ENCODE measurements at regions of chr17 and their contacts with region 1.

Region 1: GRCh38 chr17:16521070-16521727 is 29.2 kb upstream of the LRRC75A start:
- DNase-seq: peak; percentile 32 to 84
- ATAC-seq: peak; percentile 87 to 95 (median 92)
- H3K4me3 ChIP-seq: no peak overlapping the region
- H3K27ac ChIP-seq: no peak overlapping the region
- H3K4me1 ChIP-seq: peaks cover 0 to 18% (median 10%) of the 10 kb centered on the region in 9 donors
- H3K27me3 ChIP-seq: peaks cover 0 to 4% (median 0%) of the 10 kb centered on the region in 7 donors
- CTCF ChIP-seq: peak; percentile 83 to 95 (median 93)

Region 2: DNA sequence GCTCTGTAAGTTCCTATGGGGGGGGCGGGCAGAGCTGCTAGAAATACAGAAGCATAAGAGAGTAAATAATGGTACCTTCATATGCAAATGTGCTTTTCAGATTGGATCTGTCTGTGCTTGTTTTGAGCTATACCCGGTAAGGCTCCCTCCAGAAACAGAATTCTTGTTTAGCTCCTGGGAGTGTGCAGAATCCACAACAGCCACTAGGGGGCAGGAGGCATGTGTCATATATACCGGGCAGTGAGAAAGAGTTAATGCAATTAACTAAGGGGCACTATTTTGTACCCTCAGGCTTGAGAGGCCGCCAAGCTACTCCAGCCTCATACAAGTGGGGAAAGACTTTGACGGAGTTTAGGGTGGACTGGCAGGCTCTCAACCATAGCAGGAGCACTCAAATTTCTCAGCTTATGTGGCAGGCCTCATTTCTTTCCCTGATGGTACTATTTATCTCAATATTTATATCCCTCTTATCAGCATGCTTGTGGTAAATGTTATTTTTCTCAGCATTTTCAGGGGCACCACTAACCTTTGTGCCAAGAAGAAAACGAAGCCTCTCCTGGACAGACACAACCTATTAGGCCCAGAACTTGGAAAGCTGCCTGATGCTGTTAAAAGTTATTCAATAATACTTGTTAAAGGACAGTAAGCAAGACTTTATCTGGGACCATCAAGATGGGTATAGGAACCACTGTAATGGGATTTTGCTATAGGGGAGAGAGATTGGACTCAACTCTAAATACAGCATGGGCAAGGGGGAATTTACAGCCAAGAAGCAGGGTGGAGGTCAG is 157.3 kb before region 1 on chr17:
- intact Hi-C with region 1: loop called in 9 of 10 experiments (anchors 1 to 10 kb)
- DNase-seq: peak; percentile 63 to 68
- ATAC-seq: peak; percentile 55 to 90 (median 84)
- H3K4me3 ChIP-seq: no peak overlapping the region
- H3K27ac ChIP-seq: no peak overlapping the region
- H3K4me1 ChIP-seq: peaks cover 0 to 7% (median 0%) of the 10 kb centered on the region in 9 donors
- H3K27me3 ChIP-seq: peaks cover 0 to 11% (median 0%) of the 10 kb centered on the region in 7 donors
- CTCF ChIP-seq: peak; percentile 90 to 96 (median 93)

Region 3: DNA sequence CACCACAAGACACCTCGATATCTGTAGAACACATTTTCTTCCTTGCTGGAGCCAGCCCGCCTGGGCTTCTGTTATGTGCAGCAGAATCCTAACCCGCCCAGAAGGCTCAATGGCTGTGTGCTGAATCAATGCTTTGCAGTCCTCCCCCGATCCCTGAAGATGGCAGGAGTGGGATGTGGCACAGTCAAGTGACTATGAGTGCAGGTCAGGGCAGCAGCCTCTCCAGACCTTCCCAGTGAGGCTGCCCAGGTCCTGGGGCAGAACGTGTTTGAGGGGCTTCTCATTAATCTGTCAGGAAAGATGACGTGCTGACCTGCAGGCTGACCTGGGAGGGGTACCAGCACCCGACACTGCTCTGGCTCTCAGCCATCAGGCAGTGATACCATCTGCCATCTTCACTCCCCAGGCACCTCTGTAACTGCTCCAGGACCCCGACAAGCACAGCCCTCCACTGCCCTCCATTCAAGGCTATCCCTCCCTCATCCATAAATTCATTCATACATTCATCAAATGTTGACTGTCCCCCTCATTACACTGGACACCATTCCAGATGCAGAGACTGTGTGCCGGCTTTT is 64.4 kb before region 1 on chr17:
- intact Hi-C with region 1: loop called (anchors 1 to 5 kb)
- DNase-seq: no peak
- ATAC-seq: no peak
- H3K4me3 ChIP-seq: no peak overlapping the region
- H3K27ac ChIP-seq: no peak overlapping the region
- H3K4me1 ChIP-seq: peaks cover 0 to 16% (median 7%) of the 10 kb centered on the region in 9 donors
- H3K27me3 ChIP-seq: no peaks in the 10 kb centered on the region
- CTCF ChIP-seq: no peak